Endothelial cell of umbilical vein (primary cell): ENCODE measurements at regions of chr15 and their contacts with region 1.

Region 1: GRCh38 chr15:63928185-63928842 is 94.6 kb upstream of the HERC1 start:
- DNase-seq: peak; percentile 15
- H3K4me3 ChIP-seq: no peak overlapping the region
- H3K27ac ChIP-seq: no peak overlapping the region
- H3K4me1 ChIP-seq: no peaks in the 10 kb centered on the region
- H3K27me3 ChIP-seq: peaks cover 0 to 4% of the 10 kb centered on the region in 2 experiments
- CTCF ChIP-seq: no peak
- POLR2A ChIP-seq: no peak

Region 2: GRCh38 chr15:63915873-63916771 is 12.2 kb before region 1 on chr15:
- CTCF ChIA-PET with region 1: interaction called, 12 read pairs
- POLR2A ChIA-PET with region 1: no interaction called
- dilution Hi-C with region 1: no loop called
- intact Hi-C with region 1: no loop called
- DNase-seq: peak; percentile 78
- H3K4me3 ChIP-seq: no peak overlapping the region
- H3K27ac ChIP-seq: no peak overlapping the region
- H3K4me1 ChIP-seq: peaks cover 7% of the 10 kb centered on the region
- H3K27me3 ChIP-seq: no peaks in the 10 kb centered on the region
- CTCF ChIP-seq: peak; percentile 37 to 67
- POLR2A ChIP-seq: no peak

Region 3: DNA sequence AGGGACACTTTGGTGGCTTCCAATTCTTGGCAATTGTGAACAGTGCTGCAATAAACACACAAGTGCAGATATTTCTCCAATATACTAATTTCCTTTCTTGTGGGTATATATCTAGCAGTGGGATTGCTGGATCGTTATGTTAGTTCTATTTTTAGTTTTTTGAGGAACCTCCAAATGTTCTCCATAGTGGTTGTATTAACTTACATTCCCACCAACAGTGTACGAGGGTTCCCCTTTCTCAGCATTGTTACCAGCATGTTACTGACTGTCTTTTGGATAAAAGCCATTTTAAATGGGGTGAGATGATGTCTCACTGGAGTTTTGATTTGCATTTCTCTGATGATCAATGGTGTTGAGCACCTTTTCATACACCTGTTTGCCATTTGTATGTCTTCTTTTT is 25.2 kb after region 1 on chr15:
- CTCF ChIA-PET with region 1: no interaction called
- POLR2A ChIA-PET with region 1: no interaction called
- dilution Hi-C with region 1: no loop called
- intact Hi-C with region 1: no loop called
- DNase-seq: no peak
- H3K4me3 ChIP-seq: no peak overlapping the region
- H3K27ac ChIP-seq: no peak overlapping the region
- H3K4me1 ChIP-seq: peaks cover 11% of the 10 kb centered on the region
- H3K27me3 ChIP-seq: no peaks in the 10 kb centered on the region
- CTCF ChIP-seq: no peak
- POLR2A ChIP-seq: no peak

Region 4: GRCh38 chr15:64029110-64029509 is 100.8 kb after region 1 on chr15:
- CTCF ChIA-PET with region 1: no interaction called
- POLR2A ChIA-PET with region 1: no interaction called
- dilution Hi-C with region 1: no loop called
- intact Hi-C with region 1: no loop called
- DNase-seq: no peak
- H3K4me3 ChIP-seq: no peak overlapping the region
- H3K27ac ChIP-seq: no peak overlapping the region
- H3K4me1 ChIP-seq: peaks cover 5% of the 10 kb centered on the region
- H3K27me3 ChIP-seq: peaks cover 5 to 8% of the 10 kb centered on the region in 2 experiments
- CTCF ChIP-seq: no peak
- POLR2A ChIP-seq: no peak

Region 5: DNA sequence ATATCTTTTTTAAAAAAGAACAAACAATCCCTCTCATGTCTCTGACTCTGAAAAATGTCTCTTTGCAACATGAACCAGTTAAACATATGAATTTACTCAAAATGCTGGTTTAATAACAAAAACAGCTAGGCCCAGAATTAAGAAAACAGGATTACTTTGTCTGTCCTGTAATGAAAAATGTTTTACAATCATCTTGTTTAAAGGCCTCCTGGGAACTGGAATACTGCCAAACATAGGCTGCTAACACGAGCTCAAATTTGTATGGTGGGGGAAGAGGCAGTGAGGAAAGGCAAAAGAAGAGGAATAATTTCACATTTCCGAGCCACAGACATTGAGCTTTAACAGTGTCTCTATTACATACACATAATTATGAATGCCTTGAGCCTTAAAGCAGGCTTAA is 296.2 kb after region 1 on chr15:
- CTCF ChIA-PET with region 1: no interaction called
- POLR2A ChIA-PET with region 1: no interaction called
- dilution Hi-C with region 1: no loop called
- intact Hi-C with region 1: no loop called
- DNase-seq: peak; percentile 61
- H3K4me3 ChIP-seq: no peak overlapping the region
- H3K27ac ChIP-seq: no peak overlapping the region
- H3K4me1 ChIP-seq: no peaks in the 10 kb centered on the region
- H3K27me3 ChIP-seq: no peaks in the 10 kb centered on the region
- CTCF ChIP-seq: no peak
- POLR2A ChIP-seq: no peak